ENCODE measurements at regions of chr16 and their contacts with region 1.

Region 1: GRCh38 chr16:52573365-52574299 is 26.7 kb upstream of the TOX3 start:
- DNase-seq: peak; percentile 78
- H3K4me3 Mint-ChIP-seq: peak overlapping the region; percentile 1
- H3K27ac Mint-ChIP-seq: peak overlapping the region; percentile 54
- H3K4me1 Mint-ChIP-seq: peaks cover 89% of the 10 kb centered on the region
- H3K27me3 Mint-ChIP-seq: no peaks in the 10 kb centered on the region
- CTCF ChIP-seq: no peak

Region 2: GRCh38 chr16:52251495-52251894 is 322.1 kb before region 1 on chr16:
- CTCF ChIA-PET with region 1: interaction called, 3 read pairs
- intact Hi-C with region 1: loop called (anchors 5 kb)
- DNase-seq: no peak
- H3K4me3 Mint-ChIP-seq: no peak overlapping the region
- H3K27ac Mint-ChIP-seq: no peak overlapping the region
- H3K4me1 Mint-ChIP-seq: peaks cover 55% of the 10 kb centered on the region
- H3K27me3 Mint-ChIP-seq: no peaks in the 10 kb centered on the region
- CTCF ChIP-seq: no peak

Region 3: DNA sequence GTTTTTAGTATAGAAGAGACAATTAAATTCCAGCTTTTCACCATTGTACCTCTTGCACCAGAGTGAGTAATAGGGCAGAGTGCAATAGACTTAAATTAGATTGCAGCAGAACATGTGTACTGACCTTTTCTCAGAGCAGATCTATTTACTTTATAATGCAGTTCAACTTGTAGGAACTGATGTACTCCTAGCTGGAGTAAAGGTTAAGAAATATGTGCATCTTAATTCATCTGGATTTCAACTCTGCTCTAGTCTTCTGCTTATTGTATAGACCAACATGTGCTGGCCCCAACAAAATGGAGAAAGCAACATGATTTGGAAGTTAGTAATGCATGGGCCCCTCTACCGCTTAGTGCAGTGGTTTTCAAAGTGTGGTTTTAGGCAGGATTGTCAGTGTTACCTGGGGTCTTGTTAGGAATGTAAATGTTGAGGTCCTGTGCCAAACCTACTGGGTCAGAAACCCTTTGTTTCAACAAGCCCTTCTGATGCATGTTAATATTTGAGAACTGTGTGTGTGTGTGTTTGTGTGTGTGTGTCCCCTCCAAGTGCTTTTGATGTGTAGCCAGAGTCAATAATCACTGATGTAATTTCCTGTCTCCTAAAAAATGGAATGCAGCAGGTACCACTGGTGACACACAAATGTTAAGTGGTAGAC is 165.3 kb before region 1 on chr16:
- CTCF ChIA-PET with region 1: no interaction called
- intact Hi-C with region 1: loop called (anchors 5 kb)
- DNase-seq: peak; percentile 6
- H3K4me3 Mint-ChIP-seq: no peak overlapping the region
- H3K27ac Mint-ChIP-seq: peak overlapping the region; percentile 70
- H3K4me1 Mint-ChIP-seq: peaks cover 43% of the 10 kb centered on the region
- H3K27me3 Mint-ChIP-seq: no peaks in the 10 kb centered on the region
- CTCF ChIP-seq: no peak

Region 4: DNA sequence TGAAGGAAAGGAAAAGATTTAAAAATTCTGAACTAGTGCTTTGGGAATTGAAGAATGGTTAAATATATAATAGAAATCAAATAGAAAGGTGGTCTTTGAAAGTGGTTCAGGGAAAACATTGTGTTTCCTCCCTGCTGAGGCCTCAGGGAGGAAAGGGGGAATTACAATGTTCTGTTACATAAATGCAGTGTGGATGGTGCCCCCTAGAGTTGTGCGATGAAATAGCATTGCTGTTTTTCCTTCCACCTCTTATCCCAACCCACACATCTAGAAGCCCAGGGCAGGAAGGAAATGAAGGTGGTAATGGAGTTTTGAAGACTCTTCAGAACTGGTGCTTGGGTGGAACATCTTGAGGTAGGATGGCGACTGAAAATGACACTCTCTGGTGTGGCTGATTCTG is 20.3 kb before region 1 on chr16:
- CTCF ChIA-PET with region 1: interaction called, 10 read pairs
- intact Hi-C with region 1: no loop called
- DNase-seq: no peak
- H3K4me3 Mint-ChIP-seq: no peak overlapping the region
- H3K27ac Mint-ChIP-seq: no peak overlapping the region
- H3K4me1 Mint-ChIP-seq: peaks cover 54% of the 10 kb centered on the region
- H3K27me3 Mint-ChIP-seq: no peaks in the 10 kb centered on the region
- CTCF ChIP-seq: peak; percentile 59

Region 5: GRCh38 chr16:52611817-52612673 is 38.4 kb after region 1 on chr16:
- CTCF ChIA-PET with region 1: interaction called, 3 read pairs
- intact Hi-C with region 1: loop called (anchors 1 kb)
- DNase-seq: peak; percentile 71
- H3K4me3 Mint-ChIP-seq: peak overlapping the region; percentile 54
- H3K27ac Mint-ChIP-seq: peak overlapping the region; percentile 30
- H3K4me1 Mint-ChIP-seq: peaks cover 42% of the 10 kb centered on the region
- H3K27me3 Mint-ChIP-seq: no peaks in the 10 kb centered on the region
- CTCF ChIP-seq: no peak